Mammary epithelial cell (primary cell): ENCODE measurements at regions of chr12 and their contacts with region 1.

Region 1: DNA sequence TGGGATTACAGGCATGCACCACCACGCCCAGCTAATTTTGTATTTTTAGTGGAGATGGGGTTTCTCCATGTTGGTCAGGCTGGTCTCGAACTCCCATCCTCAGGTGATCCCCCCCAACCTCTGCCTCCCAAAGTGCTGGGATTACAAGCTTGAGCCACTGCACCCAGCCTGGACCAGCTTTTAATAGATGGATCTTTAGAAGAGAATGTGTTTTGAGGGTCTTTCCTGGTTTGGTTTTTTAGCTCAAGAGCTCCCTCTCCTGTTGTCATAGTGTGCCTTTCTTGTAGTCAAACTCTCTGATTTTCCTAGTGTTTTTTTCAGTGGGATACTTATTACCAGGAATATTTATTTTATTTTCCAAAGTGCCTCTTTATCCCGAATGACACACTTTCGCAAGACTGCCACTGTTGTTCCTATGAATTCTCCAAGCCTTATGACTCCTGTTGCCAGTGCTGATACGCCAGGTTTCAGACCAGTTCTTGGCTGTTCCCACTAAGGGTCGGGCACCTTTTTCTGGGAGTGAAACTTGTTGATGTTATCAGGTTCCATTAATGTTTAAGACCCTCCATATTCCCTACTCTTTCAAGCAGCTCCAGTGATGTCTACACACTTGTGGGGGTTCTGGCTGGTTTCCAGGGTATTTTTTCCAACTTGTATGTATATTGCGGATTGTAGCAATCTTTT is 31.5 kb upstream of the LIMA1 start:
- DNase-seq: no peak
- H3K4me3 ChIP-seq: no peak overlapping the region
- H3K27ac ChIP-seq: no peak overlapping the region
- H3K4me1 ChIP-seq: peaks cover 7% of the 10 kb centered on the region
- H3K27me3 ChIP-seq: no peaks in the 10 kb centered on the region
- CTCF ChIP-seq: peak; percentile 63 to 65

Region 2: GRCh38 chr12:50111693-50112455 is 202.9 kb before region 1 on chr12 and contains the start of gene COX14:
- CTCF ChIA-PET with region 1: interaction called, 4 read pairs
- dilution Hi-C with region 1: no loop called
- in situ Hi-C with region 1: no loop called
- intact Hi-C with region 1: loop called (anchors 1 kb)
- DNase-seq: peak; percentile 100
- H3K4me3 ChIP-seq: peak within 1 kb of the TSS; percentile 64 to 100 (median 87)
- H3K27ac ChIP-seq: peak within 1 kb of the TSS; percentile 76
- H3K4me1 ChIP-seq: peaks cover 15% of the 10 kb centered on the region
- H3K27me3 ChIP-seq: no peaks in the 10 kb centered on the region
- CTCF ChIP-seq: peak; percentile 83 to 94
- total RNA-seq, gene COX14: 38.5 to 51.3 TPM

Region 3: DNA sequence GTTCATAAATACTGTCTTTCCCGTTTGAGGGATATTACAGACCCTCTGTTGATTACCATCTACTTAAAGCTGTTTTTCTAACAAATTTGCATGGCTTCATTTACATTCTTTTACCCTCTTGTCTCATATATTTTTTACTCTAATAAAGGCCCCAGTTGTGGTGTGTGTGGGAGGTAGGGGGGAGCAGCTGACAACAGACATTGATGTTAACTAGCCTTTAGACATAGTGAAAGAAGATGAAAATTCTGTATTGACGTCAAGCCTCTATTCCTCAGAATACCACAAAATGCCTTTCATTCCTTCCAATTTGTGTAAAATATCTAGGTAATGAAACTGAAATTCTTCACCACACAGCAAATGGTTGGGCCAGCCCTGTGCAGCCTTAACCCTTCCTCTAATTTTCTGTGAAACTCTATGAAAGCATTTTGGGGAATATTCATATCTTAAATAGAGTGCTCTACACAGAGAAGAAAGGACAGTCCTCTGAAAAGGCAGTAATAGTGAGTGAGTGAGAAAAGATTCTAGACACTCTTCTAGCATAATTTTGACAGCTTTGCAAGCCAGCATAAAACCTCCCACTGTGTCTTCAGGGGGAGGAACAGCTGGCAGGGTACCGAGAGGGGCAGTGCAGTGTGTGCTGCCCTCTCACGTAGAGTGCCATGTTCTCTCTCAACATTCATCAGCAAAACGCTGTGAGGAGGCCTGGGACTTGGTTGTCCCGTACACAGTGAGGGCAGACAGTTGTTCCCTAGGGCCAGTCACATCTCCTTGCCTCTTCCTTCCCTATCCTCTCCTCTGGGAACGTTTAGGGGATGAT is 127.5 kb before region 1 on chr12:
- CTCF ChIA-PET with region 1: no interaction called
- dilution Hi-C with region 1: no loop called
- in situ Hi-C with region 1: no loop called
- intact Hi-C with region 1: loop called (anchors 5 kb)
- DNase-seq: peak; percentile 26
- H3K4me3 ChIP-seq: no peak overlapping the region
- H3K27ac ChIP-seq: peak overlapping the region; percentile 62
- H3K4me1 ChIP-seq: peaks cover 45% of the 10 kb centered on the region
- H3K27me3 ChIP-seq: no peaks in the 10 kb centered on the region
- CTCF ChIP-seq: no peak

Region 4: DNA sequence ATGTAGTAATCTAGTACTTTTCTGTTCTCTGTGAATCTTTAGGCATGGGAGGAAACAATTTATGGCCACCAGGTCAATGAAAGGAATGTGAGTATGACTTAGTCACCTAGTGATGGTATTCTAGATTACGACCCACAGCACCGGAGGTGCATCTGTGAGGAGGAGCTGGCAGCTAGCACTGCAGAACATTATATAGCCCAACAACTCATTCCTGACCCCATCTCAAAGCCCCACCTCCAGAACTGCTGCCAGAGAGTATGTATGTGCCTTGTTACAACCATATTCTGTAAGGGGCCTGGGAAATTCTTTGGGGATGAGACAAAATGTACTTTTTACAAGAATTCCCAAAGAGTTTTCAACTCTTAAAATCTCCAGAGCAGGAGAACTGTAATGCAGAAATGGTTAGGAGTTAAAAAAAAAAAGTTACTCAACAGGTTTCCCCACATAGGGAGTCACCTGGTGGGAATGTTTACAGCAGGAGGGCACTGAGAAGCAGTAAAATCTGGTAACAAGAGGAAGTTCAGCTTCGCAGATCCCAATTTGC is 112.7 kb before region 1 on chr12:
- CTCF ChIA-PET with region 1: no interaction called
- dilution Hi-C with region 1: no loop called
- in situ Hi-C with region 1: loop called in 1 of 2 experiments (anchors 25 kb)
- intact Hi-C with region 1: loop called (anchors 5 kb)
- DNase-seq: peak; percentile 93
- H3K4me3 ChIP-seq: no peak overlapping the region
- H3K27ac ChIP-seq: peak overlapping the region; percentile 80
- H3K4me1 ChIP-seq: peaks cover 53% of the 10 kb centered on the region
- H3K27me3 ChIP-seq: no peaks in the 10 kb centered on the region
- CTCF ChIP-seq: no peak

Region 5: GRCh38 chr12:50257686-50258551 is 56.9 kb before region 1 on chr12:
- CTCF ChIA-PET with region 1: interaction called, 3 read pairs
- dilution Hi-C with region 1: no loop called
- in situ Hi-C with region 1: no loop called
- intact Hi-C with region 1: loop called (anchors 1 kb)
- DNase-seq: peak; percentile 32
- H3K4me3 ChIP-seq: no peak overlapping the region
- H3K27ac ChIP-seq: peak overlapping the region; percentile 43
- H3K4me1 ChIP-seq: peaks cover 60% of the 10 kb centered on the region
- H3K27me3 ChIP-seq: no peaks in the 10 kb centered on the region
- CTCF ChIP-seq: no peak